ENCODE measurements at regions of chr3 and their contacts with region 1.

Region 1: DNA sequence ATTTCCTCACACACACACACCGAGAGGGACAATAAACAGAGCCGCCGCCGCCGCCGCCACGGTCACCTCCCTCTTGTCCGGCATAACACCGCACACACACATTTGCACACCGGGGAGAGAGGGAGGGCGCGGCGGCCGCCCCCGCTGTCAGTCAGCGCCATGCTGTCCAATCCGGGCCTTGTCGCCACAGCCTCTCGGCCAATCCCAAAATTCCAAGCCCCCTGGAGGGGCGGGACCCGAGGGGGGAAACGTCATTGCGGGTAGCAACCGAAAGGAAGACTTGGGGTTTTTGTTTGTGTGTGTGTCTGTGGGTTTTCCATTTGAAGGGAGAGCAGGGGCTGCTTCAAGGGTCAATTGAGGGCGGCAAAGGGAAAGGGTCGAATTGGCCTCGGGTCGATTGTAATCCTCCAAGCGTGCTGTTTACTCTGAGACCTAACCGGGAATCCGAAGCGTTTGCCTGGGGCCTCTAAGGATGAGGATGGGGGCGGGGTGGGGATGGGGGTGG is at the start of gene TOP2B:
- DNase-seq: peak; percentile 96 to 98 (median 98)
- ATAC-seq: peak; percentile 99 to 100
- H3K4me3 ChIP-seq: peak within 1 kb of the TSS; percentile 90
- H3K27ac ChIP-seq: peak within 1 kb of the TSS; percentile 96
- H3K4me1 ChIP-seq: no peaks in the 10 kb centered on the region
- H3K27me3 ChIP-seq: no peaks in the 10 kb centered on the region
- total RNA-seq, gene TOP2B: 99.0 to 112 (median 105) TPM

Region 2: DNA sequence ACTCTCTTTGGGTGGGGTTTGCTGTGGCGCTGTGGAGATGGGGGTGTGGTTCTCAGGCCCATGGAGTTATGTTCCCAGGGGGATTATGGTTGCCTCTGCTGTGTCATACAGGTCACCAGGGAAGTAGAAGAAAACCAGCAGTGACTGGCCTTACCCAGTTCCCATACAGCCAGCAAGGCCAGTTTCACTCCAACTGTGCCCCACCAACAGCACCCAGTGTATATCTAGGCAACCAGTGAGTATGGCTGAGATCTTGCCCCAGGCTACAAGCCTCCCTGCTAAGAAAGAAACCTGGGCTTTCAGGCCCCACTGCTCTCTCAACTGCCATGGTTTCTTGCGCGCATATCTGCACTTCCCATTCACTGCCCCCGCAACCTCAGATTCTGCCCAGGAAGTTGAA is 268.2 kb before region 1 on chr3:
- intact Hi-C with region 1: no loop called
- DNase-seq: no peak
- ATAC-seq: no peak
- H3K4me3 ChIP-seq: no peak overlapping the region
- H3K27ac ChIP-seq: no peak overlapping the region
- H3K4me1 ChIP-seq: no peaks in the 10 kb centered on the region
- H3K27me3 ChIP-seq: no peaks in the 10 kb centered on the region

Region 3: DNA sequence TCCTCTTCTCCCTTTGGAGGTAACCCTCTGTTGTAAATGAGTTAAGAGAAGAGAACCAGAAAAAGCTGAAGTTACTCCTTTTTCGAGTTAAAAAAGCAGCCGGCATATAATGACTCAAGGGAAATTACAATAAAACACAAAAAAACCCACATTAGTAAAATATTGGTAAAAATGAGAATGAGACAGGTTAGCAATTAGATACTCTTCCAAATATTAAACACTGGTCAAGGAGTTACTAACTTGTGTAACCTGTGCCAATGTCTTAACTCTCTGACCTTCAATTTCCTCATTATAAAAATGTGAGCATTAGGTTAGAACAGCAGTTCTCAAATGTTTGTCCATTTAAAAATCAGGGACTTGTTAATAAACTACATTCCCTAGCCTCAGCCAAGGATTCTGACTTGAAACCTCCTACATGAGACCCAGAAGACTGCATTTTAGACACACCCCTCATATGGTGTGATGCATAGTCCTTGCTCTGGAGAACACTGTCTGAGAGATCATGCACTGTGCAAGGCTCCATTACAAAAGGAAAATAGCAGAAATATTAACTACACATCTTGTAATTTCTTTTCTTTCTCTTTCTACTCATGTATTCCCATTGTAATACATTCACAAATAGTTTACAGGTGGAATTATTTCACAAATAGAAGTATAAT is 42.5 kb after region 1 on chr3:
- intact Hi-C with region 1: no loop called
- DNase-seq: no peak
- ATAC-seq: no peak
- H3K4me3 ChIP-seq: no peak overlapping the region
- H3K27ac ChIP-seq: no peak overlapping the region
- H3K4me1 ChIP-seq: no peaks in the 10 kb centered on the region
- H3K27me3 ChIP-seq: no peaks in the 10 kb centered on the region

Region 4: GRCh38 chr3:25782938-25783660 is 118.2 kb after region 1 on chr3 and contains the start of gene NGLY1:
- intact Hi-C with region 1: loop called in 2 of 4 experiments (anchors 5 to 10 kb)
- DNase-seq: peak; percentile 88 to 95 (median 95)
- ATAC-seq: peak; percentile 98 to 99
- H3K4me3 ChIP-seq: peak within 1 kb of the TSS; percentile 92
- H3K27ac ChIP-seq: peak within 1 kb of the TSS; percentile 93
- H3K4me1 ChIP-seq: peaks cover 3% of the 10 kb centered on the region
- H3K27me3 ChIP-seq: no peaks in the 10 kb centered on the region
- total RNA-seq, gene NGLY1: 30.9 to 36.3 (median 33.9) TPM

Region 5: GRCh38 chr3:25789596-25790556 is 125.0 kb after region 1 on chr3 and contains the start of gene OXSM:
- intact Hi-C with region 1: loop called in 1 of 4 experiments (anchors 10 kb)
- DNase-seq: peak; percentile 94 to 96 (median 96)
- ATAC-seq: peak; percentile 98 to 99
- H3K4me3 ChIP-seq: peak within 1 kb of the TSS; percentile 56
- H3K27ac ChIP-seq: peak within 1 kb of the TSS; percentile 93
- H3K4me1 ChIP-seq: peaks cover 5% of the 10 kb centered on the region
- H3K27me3 ChIP-seq: no peaks in the 10 kb centered on the region
- total RNA-seq, gene OXSM: 11.6 to 15.9 (median 14.0) TPM

Measured in right cardiac atrium (tissue), 5 donors.